ENCODE measurements at regions of chr5 and their contacts with region 1.

Region 1: DNA sequence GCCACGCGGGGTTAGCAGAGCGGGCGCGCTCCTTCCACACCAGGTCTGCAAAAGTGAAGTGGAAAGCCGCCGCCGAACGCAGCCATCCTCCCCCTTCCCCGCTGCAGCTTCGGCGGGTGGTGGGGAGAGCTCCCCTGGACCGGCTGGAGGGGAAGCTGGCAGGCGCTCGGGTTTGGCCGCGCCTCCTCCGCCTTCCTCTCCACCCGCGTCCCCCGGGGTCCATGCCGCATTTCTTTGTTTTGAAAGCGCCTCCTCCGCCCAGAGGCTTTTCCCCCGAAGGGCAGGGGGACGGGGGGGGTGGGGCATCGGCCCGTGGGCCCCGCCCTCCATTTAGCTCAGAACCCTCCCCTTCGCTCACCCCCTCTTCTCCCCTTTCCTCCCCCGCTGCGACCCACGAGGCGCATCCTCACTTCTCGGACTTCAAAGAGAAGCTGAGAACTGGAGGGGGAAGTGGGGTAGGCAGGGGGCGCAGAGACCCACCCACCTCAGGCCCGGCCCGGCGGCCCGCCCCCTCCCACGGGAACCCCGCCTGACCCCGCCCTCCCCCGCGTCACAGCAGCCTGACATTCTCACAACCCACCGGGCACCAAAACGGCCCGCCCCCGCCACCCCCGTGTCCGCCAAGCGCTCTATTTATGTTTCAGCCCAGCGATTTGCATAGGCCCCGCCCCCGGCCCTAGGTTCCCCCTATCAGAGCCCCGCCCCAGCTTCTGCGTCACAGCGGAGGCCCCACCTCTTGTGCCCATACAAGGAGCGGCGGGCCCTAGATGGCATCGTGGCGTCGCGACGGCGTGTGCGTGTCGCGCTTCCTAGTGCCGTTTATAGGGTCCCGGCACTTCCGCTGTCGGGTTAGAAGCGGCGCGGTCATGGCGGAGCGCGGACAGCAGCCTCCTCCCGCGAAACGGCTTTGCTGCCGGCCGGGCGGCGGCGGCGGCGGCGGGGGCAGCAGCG is at the start of gene ZSWIM6:
- DNase-seq: peak; percentile 99
- H3K4me3 ChIP-seq: peak within 1 kb of the TSS; percentile 88
- H3K27ac ChIP-seq: peak within 1 kb of the TSS; percentile 82
- H3K27me3 ChIP-seq: no peaks in the 10 kb centered on the region
- CTCF ChIP-seq: no peak
- polyA plus RNA-seq, gene ZSWIM6: 18.6 and 18.9 TPM in 2 replicates

Region 2: GRCh38 chr5:60960591-60960990 is 371.1 kb before region 1 on chr5:
- CTCF ChIA-PET with region 1: interaction called, 14 read pairs
- POLR2A ChIA-PET with region 1: no interaction called
- DNase-seq: no peak
- H3K4me3 ChIP-seq: no peak overlapping the region
- H3K27ac ChIP-seq: no peak overlapping the region
- H3K27me3 ChIP-seq: no peaks in the 10 kb centered on the region
- CTCF ChIP-seq: peak; percentile 71

Region 3: DNA sequence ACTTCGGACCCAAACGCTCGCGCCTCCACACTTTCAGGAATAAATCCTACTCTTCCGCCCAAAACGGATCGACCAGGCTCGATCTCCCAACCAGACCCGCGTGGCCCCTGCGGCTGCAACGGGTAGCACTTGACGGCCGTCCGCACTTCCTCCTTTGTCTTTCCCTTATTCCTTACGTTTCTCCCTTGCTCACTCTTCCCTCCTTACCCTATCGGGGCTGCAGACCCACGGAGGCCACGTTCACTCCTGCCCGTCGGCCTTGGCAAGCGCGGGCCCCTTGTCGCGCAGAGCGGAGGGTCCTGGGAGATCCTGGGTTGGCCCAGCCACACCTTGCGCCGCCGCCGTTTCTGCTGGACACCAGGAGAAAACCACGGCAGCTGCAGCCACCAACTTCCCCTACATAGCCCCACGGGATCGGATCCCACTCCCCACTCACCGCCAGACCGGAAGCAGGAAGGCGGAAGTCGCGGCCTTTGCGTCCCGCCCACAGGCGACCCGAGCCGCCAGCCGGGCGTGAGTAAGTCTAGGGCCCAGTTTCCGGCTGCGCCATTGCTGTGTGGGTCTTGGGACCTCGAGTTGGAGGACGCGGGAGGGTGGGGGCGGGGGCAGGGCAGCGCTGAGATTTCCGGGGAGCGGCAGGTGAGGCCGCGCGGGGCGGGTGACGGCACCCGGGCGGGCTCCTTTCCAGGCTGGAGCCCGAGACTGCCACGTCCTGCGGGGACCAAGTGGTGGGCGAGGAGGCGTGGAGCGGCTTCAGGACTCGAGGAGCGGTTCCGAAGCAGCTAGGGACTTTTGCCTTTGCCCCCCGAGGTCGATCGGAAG is 169.5 kb before region 1 on chr5 and contains the start of gene SMIM15:
- CTCF ChIA-PET with region 1: interaction called, 5 read pairs
- POLR2A ChIA-PET with region 1: interaction called, 15 read pairs
- DNase-seq: peak; percentile 66
- H3K4me3 ChIP-seq: peak within 1 kb of the TSS; percentile 65
- H3K27ac ChIP-seq: peak within 1 kb of the TSS; percentile 89
- H3K27me3 ChIP-seq: no peaks in the 10 kb centered on the region
- CTCF ChIP-seq: no peak
- polyA plus RNA-seq, gene SMIM15: 67.5 and 88.2 TPM in 2 replicates

Region 4: DNA sequence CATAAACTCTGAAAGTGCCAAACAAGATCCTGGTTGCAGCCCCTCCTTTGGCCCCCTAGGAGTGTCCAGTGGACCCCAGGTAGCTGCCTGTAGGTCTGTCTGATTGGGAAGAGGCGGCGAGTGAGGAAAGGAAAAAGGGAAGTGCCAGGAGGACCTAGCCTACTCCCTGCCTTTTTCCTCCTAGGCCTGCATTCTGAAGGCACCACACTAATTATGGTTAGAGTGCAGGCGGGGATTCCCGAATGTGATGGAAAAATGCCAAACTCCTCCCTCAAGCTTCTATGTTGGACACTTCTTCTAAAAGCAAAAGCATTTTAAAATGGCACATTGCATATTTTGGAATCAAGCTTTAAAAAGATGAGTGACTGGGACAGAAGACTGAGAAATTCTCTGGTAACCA is 86.2 kb before region 1 on chr5:
- CTCF ChIA-PET with region 1: no interaction called
- POLR2A ChIA-PET with region 1: no interaction called
- DNase-seq: no peak
- H3K4me3 ChIP-seq: no peak overlapping the region
- H3K27ac ChIP-seq: no peak overlapping the region
- H3K27me3 ChIP-seq: no peaks in the 10 kb centered on the region
- CTCF ChIP-seq: no peak

Region 5: DNA sequence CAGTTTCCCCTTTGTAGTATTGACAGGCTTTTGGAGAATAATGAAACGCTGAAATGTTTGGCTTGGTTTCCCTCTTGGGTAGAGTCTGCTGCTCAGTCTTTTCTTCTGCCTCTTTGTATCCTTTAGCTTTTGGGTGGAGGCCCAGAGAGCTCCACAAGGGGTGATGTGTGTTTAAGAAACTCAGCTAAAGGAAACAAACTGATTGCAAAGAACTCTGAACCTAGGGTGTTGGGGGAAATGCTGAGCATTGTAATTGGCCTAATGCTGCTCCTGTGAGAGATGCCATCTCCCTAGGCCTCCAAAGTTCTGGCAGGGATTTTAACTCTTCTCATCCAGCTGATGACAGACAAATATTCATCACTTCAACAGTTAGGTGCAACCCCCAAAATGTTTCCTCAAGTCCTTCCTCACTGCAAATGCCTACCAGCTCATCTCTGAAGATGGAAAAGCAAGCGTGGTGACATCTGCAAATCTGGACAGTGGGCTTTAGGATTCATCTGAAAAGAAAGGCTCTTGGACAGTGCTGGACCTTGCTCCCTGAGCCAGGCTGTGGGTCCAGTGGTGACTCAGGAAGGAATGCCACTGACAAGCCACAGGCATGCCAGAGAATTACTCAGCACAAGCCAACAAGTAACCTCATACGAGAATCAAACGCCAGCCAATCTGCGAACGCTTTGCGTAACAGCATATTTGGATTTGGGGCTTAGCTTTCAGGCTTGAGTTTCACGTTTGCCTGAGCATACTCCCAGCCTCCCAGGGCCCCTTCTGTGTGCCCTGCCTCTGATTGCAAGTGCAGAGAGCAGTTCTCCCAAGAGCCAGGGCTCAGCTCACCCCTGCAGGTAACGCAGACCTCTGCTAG is 30.1 kb before region 1 on chr5:
- CTCF ChIA-PET with region 1: interaction called, 4 read pairs
- POLR2A ChIA-PET with region 1: interaction called, 48 read pairs
- DNase-seq: peak; percentile 99
- H3K4me3 ChIP-seq: peak overlapping the region; percentile 47
- H3K27ac ChIP-seq: peak overlapping the region; percentile 92
- H3K27me3 ChIP-seq: no peaks in the 10 kb centered on the region
- CTCF ChIP-seq: peak; percentile 27

Region 6: DNA sequence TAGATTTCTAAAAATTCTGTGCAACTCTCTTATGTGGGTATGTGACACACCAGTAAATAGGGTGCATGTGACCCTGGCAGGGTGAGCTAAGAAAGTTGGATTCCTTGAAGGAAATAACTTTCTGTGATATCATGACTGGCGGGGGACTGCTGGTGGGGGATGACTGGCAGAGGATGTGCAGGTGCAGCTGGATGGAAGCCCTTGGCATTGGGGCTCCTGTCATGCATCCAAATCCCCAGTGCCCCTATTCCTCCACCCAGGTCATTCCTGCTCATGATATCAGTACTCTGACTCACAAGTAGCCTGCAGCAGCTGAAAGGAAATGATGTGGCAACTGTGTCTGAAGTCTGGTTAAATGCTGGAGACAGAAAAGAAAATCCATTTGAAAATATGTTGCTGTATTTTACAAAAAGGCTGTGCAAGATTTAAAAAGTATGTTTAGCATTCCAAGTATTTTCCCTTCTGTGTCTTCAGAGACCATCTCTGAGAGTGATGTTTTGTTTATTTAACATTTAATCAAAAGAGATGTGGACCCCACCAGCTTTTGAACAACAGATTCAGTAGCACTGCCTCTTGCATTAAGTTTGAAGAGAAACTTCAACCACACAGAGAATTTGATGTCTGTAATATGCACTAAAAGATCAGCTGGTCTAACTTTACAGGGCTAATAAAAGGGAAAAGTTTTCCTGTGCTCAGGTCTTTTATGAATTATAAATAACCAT is 17.6 kb before region 1 on chr5:
- CTCF ChIA-PET with region 1: interaction called, 4 read pairs
- POLR2A ChIA-PET with region 1: interaction called, 15 read pairs
- DNase-seq: peak; percentile 63
- H3K4me3 ChIP-seq: no peak overlapping the region
- H3K27ac ChIP-seq: peak overlapping the region; percentile 85
- H3K27me3 ChIP-seq: no peaks in the 10 kb centered on the region
- CTCF ChIP-seq: no peak

Region 7: DNA sequence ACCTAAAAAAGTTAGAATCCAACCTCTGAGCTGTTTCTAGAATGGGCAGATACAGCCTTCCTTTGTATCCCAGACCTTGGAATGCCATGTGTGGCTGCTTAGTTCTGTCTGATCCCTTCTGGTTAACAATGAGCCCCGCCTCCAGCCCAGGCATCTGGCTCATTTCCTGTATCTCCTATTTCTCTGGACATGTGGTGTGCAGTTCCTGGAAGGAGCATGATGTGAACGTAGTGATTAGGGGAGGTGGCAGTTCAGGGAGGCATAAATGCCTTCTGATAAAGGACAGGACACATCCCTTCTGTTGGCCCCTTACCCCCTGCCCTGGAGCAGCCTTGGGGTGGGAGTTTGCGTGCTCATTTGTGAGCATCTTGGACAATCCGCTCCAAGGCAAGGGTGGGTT is 243.4 kb after region 1 on chr5:
- CTCF ChIA-PET with region 1: no interaction called
- POLR2A ChIA-PET with region 1: no interaction called
- DNase-seq: peak; percentile 55
- H3K4me3 ChIP-seq: no peak overlapping the region
- H3K27ac ChIP-seq: no peak overlapping the region
- H3K27me3 ChIP-seq: peaks cover 3% of the 10 kb centered on the region
- CTCF ChIP-seq: no peak

Region 8: DNA sequence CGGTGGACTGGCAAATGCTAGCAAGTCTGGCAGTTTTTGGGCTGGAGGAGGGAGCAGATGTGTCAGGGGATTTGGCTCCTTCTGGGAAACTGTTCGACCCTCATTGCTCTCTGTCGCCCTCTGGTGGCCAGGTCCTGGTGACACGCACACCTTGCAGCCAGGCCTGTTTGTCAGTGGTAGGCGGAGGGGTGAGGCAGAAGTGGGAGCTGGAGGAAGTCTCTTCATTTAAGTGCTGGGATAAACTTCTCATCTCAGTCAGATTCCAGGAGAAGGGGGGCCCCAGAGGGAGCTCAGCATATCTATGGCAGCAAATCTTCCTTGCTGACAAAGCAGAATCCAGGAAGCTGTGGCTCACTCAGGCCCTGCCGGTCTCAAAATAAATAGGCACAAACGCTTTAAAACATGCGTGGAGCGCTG is 326.9 kb after region 1 on chr5:
- CTCF ChIA-PET with region 1: interaction called, 17 read pairs
- POLR2A ChIA-PET with region 1: no interaction called
- DNase-seq: peak; percentile 38
- H3K4me3 ChIP-seq: no peak overlapping the region
- H3K27ac ChIP-seq: no peak overlapping the region
- H3K27me3 ChIP-seq: peaks cover 13% of the 10 kb centered on the region
- CTCF ChIP-seq: peak; percentile 94